CD4-positive, alpha-beta memory T cell (primary cell): ENCODE measurements at regions of chr7 and their contacts with region 1.

Region 1: GRCh38 chr7:66591799-66592596 is 36.7 kb upstream of the KCTD7 start:
- DNase-seq: peak; percentile 85 to 93 (median 88)
- H3K4me3 ChIP-seq: peak overlapping the region; percentile 57 to 94
- H3K4me3 Mint-ChIP-seq: peak overlapping the region; percentile 96 to 99 (median 97)
- H3K27ac ChIP-seq: peak overlapping the region; percentile 80
- H3K27ac Mint-ChIP-seq: peak overlapping the region; percentile 95 to 99 (median 98)
- H3K4me1 ChIP-seq: peaks cover 48% of the 10 kb centered on the region
- H3K4me1 Mint-ChIP-seq: peaks cover 31 to 61% (median 46%) of the 10 kb centered on the region in 4 donors
- H3K27me3 ChIP-seq: no peaks in the 10 kb centered on the region
- H3K27me3 Mint-ChIP-seq: no peaks in the 10 kb centered on the region

Region 2: DNA sequence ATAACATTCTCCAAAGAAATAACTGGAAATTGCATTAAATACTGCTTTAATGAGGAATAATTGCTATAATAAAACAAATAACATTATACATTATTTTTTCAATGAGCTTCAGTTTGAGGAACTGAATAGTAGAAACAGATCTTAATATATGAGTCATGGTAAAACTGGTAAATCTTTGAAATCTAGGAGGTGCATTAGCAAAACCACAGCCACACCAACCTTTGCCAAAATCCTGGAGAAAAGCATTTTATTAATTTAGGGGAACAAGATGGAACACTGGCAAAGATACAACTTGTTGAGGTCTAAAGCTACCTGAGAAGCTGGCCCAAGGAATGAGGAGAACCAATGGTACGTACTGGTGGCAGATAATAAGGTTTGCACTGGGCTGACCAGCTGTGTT is 521.8 kb before region 1 on chr7:
- CTCF ChIA-PET with region 1: no interaction called
- POLR2A ChIA-PET with region 1: no interaction called
- intact Hi-C with region 1: no loop called
- DNase-seq: no peak
- H3K4me3 ChIP-seq: no peak overlapping the region
- H3K4me3 Mint-ChIP-seq: no peak overlapping the region
- H3K27ac ChIP-seq: no peak overlapping the region
- H3K27ac Mint-ChIP-seq: no peak overlapping the region
- H3K4me1 ChIP-seq: no peaks in the 10 kb centered on the region
- H3K4me1 Mint-ChIP-seq: peaks cover 0 to 2% (median under 1%) of the 10 kb centered on the region in 4 donors
- H3K27me3 ChIP-seq: no peaks in the 10 kb centered on the region
- H3K27me3 Mint-ChIP-seq: no peaks in the 10 kb centered on the region

Region 3: GRCh38 chr7:66474441-66474840 is 117.6 kb before region 1 on chr7:
- CTCF ChIA-PET with region 1: no interaction called
- POLR2A ChIA-PET with region 1: no interaction called
- intact Hi-C with region 1: loop called (anchors 2 kb)
- DNase-seq: no peak
- H3K4me3 ChIP-seq: no peak overlapping the region
- H3K4me3 Mint-ChIP-seq: no peak overlapping the region
- H3K27ac ChIP-seq: no peak overlapping the region
- H3K27ac Mint-ChIP-seq: no peak overlapping the region
- H3K4me1 ChIP-seq: no peaks in the 10 kb centered on the region
- H3K4me1 Mint-ChIP-seq: no peaks in the 10 kb centered on the region
- H3K27me3 ChIP-seq: no peaks in the 10 kb centered on the region
- H3K27me3 Mint-ChIP-seq: no peaks in the 10 kb centered on the region

Region 4: DNA sequence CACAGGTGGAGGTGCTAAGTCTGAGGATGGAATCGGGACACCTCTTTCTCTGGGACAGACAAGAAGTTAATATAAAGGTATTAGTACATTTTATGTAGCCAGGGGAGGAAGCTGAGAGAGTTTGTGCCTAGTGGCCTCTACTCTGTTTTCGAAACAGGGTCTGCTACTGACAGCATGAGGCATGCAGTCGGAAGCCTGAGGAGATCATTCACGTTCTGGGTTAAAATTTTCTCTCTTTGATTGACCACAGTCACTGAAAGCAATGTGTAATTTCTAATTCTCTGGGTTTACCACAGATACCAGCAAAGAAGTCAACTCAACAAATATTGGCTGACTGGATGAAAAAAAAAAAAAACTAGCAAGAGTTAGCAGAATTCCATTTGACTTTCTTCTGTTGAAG is 16.6 kb before region 1 on chr7:
- CTCF ChIA-PET with region 1: no interaction called
- POLR2A ChIA-PET with region 1: no interaction called
- intact Hi-C with region 1: no loop called
- DNase-seq: no peak
- H3K4me3 ChIP-seq: no peak overlapping the region
- H3K4me3 Mint-ChIP-seq: no peak overlapping the region
- H3K27ac ChIP-seq: no peak overlapping the region
- H3K27ac Mint-ChIP-seq: peak overlapping the region in 6 of 7 donors; percentile 35 to 76 (median 60)
- H3K4me1 ChIP-seq: peaks cover 23% of the 10 kb centered on the region
- H3K4me1 Mint-ChIP-seq: peaks cover 25 to 58% (median 44%) of the 10 kb centered on the region in 4 donors
- H3K27me3 ChIP-seq: no peaks in the 10 kb centered on the region
- H3K27me3 Mint-ChIP-seq: no peaks in the 10 kb centered on the region

Region 5: GRCh38 chr7:66654123-66654732 is 62.2 kb after region 1 on chr7:
- CTCF ChIA-PET with region 1: interaction called, 3 read pairs
- POLR2A ChIA-PET with region 1: interaction called, 19 read pairs
- intact Hi-C with region 1: loop called (anchors 1 kb)
- DNase-seq: peak; percentile 97 to 99 (median 98)
- H3K4me3 ChIP-seq: peak overlapping the region; percentile 90 to 91
- H3K4me3 Mint-ChIP-seq: peak overlapping the region; percentile 96 to 99 (median 97)
- H3K27ac ChIP-seq: peak overlapping the region; percentile 95
- H3K27ac Mint-ChIP-seq: peak overlapping the region; percentile 99
- H3K4me1 ChIP-seq: peaks cover 17% of the 10 kb centered on the region
- H3K4me1 Mint-ChIP-seq: peaks cover 10 to 33% (median 24%) of the 10 kb centered on the region in 4 donors
- H3K27me3 ChIP-seq: no peaks in the 10 kb centered on the region
- H3K27me3 Mint-ChIP-seq: no peaks in the 10 kb centered on the region

Region 6: DNA sequence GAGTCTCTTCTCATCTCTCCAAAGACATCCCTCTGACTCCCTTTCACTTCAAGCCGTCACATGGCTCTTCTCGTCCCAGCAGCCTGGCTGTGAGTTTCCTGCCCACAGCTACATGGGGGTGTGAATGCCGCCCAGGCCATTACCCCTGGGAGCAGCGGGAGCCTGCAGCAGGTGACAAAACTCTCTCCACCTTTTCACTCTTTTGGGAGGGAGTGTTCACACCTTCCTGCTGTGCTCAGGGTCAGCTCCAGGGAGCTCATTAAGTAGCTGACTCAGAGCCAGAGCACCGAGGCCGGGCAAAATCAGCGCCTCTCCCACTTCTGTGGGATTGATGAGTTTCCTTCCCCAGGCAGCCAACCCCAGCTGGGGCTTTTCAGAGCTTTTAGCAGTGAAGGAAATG is 675.9 kb after region 1 on chr7:
- CTCF ChIA-PET with region 1: no interaction called
- POLR2A ChIA-PET with region 1: no interaction called
- intact Hi-C with region 1: no loop called
- DNase-seq: no peak
- H3K4me3 ChIP-seq: no peak overlapping the region
- H3K4me3 Mint-ChIP-seq: no peak overlapping the region
- H3K27ac ChIP-seq: no peak overlapping the region
- H3K27ac Mint-ChIP-seq: no peak overlapping the region
- H3K4me1 ChIP-seq: no peaks in the 10 kb centered on the region
- H3K4me1 Mint-ChIP-seq: no peaks in the 10 kb centered on the region
- H3K27me3 ChIP-seq: no peaks in the 10 kb centered on the region
- H3K27me3 Mint-ChIP-seq: no peaks in the 10 kb centered on the region